CD8-positive, alpha-beta memory T cell (primary cell): ENCODE measurements at regions of chr15 and their contacts with region 1.

Region 1: GRCh38 chr15:42581272-42581730 is 5.9 kb downstream of the STARD9 start:
- DNase-seq: peak; percentile 66 to 86 (median 75)
- H3K4me3 ChIP-seq: peak overlapping the region; percentile 70
- H3K4me3 Mint-ChIP-seq: peak overlapping the region; percentile 83 to 97 (median 89)
- H3K27ac ChIP-seq: peak overlapping the region; percentile 66
- H3K27ac Mint-ChIP-seq: peak overlapping the region; percentile 81 to 99 (median 94)
- H3K4me1 ChIP-seq: peaks cover 17% of the 10 kb centered on the region
- H3K4me1 Mint-ChIP-seq: peaks cover 38 to 49% (median 45%) of the 10 kb centered on the region in 3 donors
- H3K27me3 ChIP-seq: no peaks in the 10 kb centered on the region
- H3K27me3 Mint-ChIP-seq: peaks cover 0 to 2% of the 10 kb centered on the region in 2 donors

Region 2: GRCh38 chr15:42604894-42605744 is 23.8 kb after region 1 on chr15:
- CTCF ChIA-PET with region 1: interaction called, 4 read pairs
- POLR2A ChIA-PET with region 1: interaction called, 18 read pairs
- DNase-seq: peak in 1 of 5 donors; percentile 22
- H3K4me3 ChIP-seq: peak overlapping the region; percentile 16
- H3K4me3 Mint-ChIP-seq: peak overlapping the region in 6 of 7 donors; percentile 38 to 77 (median 60)
- H3K27ac ChIP-seq: no peak overlapping the region
- H3K27ac Mint-ChIP-seq: peak overlapping the region in 7 of 8 donors; percentile 21 to 79 (median 67)
- H3K4me1 ChIP-seq: peaks cover 36% of the 10 kb centered on the region
- H3K4me1 Mint-ChIP-seq: peaks cover 36 to 57% (median 55%) of the 10 kb centered on the region in 3 donors
- H3K27me3 ChIP-seq: no peaks in the 10 kb centered on the region
- H3K27me3 Mint-ChIP-seq: peaks cover 0 to 1% of the 10 kb centered on the region in 2 donors